ENCODE measurements at regions of chr2 and their contacts with region 1.

Region 1: GRCh38 chr2:144671695-144672455 is 152.0 kb upstream of the ZEB2 start:
- DNase-seq: no peak
- H3K4me3 ChIP-seq: no peak overlapping the region
- H3K27ac ChIP-seq: no peak overlapping the region
- H3K4me1 ChIP-seq: no peaks in the 10 kb centered on the region
- H3K27me3 ChIP-seq: no peaks in the 10 kb centered on the region
- CTCF ChIP-seq: no peak
- POLR2A ChIP-seq: no peak

Region 2: GRCh38 chr2:144111437-144111836 is 560.4 kb before region 1 on chr2:
- intact Hi-C with region 1: no loop called
- DNase-seq: no peak
- H3K4me3 ChIP-seq: no peak overlapping the region
- H3K27ac ChIP-seq: no peak overlapping the region
- H3K4me1 ChIP-seq: no peaks in the 10 kb centered on the region
- H3K27me3 ChIP-seq: no peaks in the 10 kb centered on the region
- CTCF ChIP-seq: no peak
- POLR2A ChIP-seq: no peak

Region 3: GRCh38 chr2:144583741-144584453 is 88.0 kb before region 1 on chr2:
- intact Hi-C with region 1: no loop called
- DNase-seq: no peak
- H3K4me3 ChIP-seq: no peak overlapping the region
- H3K27ac ChIP-seq: no peak overlapping the region
- H3K4me1 ChIP-seq: no peaks in the 10 kb centered on the region
- H3K27me3 ChIP-seq: no peaks in the 10 kb centered on the region
- CTCF ChIP-seq: no peak
- POLR2A ChIP-seq: no peak

Region 4: GRCh38 chr2:144625216-144626010 is 46.5 kb before region 1 on chr2:
- intact Hi-C with region 1: no loop called
- DNase-seq: peak in 1 of 2 donors; percentile 18
- H3K4me3 ChIP-seq: no peak overlapping the region
- H3K27ac ChIP-seq: no peak overlapping the region
- H3K4me1 ChIP-seq: no peaks in the 10 kb centered on the region
- H3K27me3 ChIP-seq: no peaks in the 10 kb centered on the region
- CTCF ChIP-seq: no peak
- POLR2A ChIP-seq: no peak

Region 5: GRCh38 chr2:145184741-145185651 is 513.1 kb after region 1 on chr2:
- intact Hi-C with region 1: loop called (anchors 5 kb)
- DNase-seq: no peak
- H3K4me3 ChIP-seq: no peak overlapping the region
- H3K27ac ChIP-seq: peak overlapping the region in 1 of 2 donors; percentile 81
- H3K4me1 ChIP-seq: no peaks in the 10 kb centered on the region
- H3K27me3 ChIP-seq: no peaks in the 10 kb centered on the region
- CTCF ChIP-seq: no peak
- POLR2A ChIP-seq: no peak

Region 6: DNA sequence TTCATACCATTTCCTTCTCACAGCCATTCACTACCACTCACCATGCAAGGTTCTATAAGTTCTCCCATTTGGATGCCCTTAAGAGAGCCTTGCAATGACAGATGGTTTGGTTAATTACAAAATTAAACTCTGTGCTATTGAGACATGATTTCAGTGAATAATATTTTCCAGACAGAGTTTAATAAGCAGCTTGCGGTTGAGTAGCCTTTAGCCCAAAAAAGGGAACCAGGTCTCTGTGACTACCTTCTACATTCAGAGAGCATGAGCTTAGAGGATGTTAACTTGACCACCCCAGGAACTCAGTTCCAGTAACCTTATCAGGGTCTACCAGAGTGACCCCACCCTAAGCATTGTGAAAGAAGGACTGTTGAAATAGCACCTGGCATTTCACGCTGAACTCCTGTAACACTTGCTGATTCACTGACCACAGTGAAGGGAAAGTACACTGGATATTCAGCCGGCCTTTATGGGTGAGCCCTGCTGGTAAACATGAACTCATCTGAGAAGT is 1021.1 kb after region 1 on chr2:
- intact Hi-C with region 1: no loop called
- DNase-seq: no peak
- H3K4me3 ChIP-seq: no peak overlapping the region
- H3K27ac ChIP-seq: no peak overlapping the region
- H3K4me1 ChIP-seq: no peaks in the 10 kb centered on the region
- H3K27me3 ChIP-seq: no peaks in the 10 kb centered on the region
- CTCF ChIP-seq: no peak
- POLR2A ChIP-seq: no peak